Activated T-helper 1 cell treated with anti-CD3 and anti-CD28 coated beads, Interleukin-12 subunit alpha, Interleukin-12 subunit beta, Interleukin-2, Interleukin-4 antibody, amounts not matched to agents 30 ng/mL and 10 ng/mL and 1 ng/mL, durations not matched to agents 14 hours and 24 hours and 36 hours (primary cell): ENCODE measurements at regions of chr4 and their contacts with region 1.

Region 1: DNA sequence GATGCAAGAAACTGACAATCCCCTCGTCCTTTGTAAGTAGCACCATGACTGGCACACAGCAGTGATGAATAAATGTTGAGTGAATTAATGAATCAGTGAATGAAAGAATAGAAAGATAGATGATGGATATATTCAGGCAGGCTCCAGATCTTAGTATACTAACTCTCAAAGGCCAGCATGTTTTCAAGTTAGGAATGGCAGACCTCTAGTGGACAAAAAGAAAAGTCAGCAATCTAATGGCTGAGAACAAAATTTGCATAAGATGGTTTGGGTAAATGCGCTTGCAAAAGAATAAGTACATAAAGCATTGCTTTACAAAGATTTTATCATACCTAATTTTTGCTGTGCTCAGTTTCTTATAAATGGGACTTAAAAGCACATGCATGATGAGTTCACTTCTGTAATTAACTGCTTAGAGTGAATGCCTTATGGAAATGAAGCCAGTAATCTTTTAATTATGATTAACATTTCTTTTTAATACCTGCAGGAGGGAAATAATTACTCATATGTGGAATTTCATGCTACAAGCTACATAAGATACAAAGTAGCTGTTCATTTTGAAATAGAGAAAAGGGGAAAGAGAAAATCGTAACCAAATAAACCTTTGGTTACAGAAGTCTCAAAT is 126.9 kb upstream of the GPRIN3 start:
- DNase-seq: peak; percentile 5
- H3K4me3 Mint-ChIP-seq: no peak overlapping the region
- H3K27ac Mint-ChIP-seq: no peak overlapping the region
- H3K4me1 Mint-ChIP-seq: peaks cover 29% of the 10 kb centered on the region
- H3K27me3 Mint-ChIP-seq: no peaks in the 10 kb centered on the region

Region 2: GRCh38 chr4:89158884-89159503 is 275.5 kb before region 1 on chr4:
- intact Hi-C with region 1: loop called (anchors 1 kb)
- DNase-seq: no peak
- H3K4me3 Mint-ChIP-seq: no peak overlapping the region
- H3K27ac Mint-ChIP-seq: no peak overlapping the region
- H3K4me1 Mint-ChIP-seq: no peaks in the 10 kb centered on the region
- H3K27me3 Mint-ChIP-seq: peaks cover 13% of the 10 kb centered on the region

Region 3: DNA sequence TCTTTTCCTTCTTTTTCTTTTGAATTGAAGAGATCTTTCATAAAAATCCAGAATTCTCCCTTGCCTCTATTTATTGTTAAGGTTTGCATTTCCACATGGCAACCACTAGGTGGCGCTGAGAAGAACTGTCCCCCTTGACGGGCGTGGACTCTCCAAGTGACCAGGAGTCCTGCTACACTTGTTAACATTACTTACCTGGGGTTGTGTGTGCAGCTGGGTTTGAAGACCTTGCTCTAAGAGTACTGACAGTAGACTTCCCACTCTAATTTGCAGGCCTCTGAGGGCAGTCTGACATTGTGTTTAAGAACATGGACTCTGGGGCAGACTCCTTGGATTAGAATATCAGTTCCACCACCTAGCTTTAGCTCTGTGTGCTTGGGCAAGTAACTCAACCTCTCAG is 179.6 kb before region 1 on chr4:
- intact Hi-C with region 1: loop called (anchors 1 kb)
- DNase-seq: peak; percentile 13
- H3K4me3 Mint-ChIP-seq: no peak overlapping the region
- H3K27ac Mint-ChIP-seq: peak overlapping the region; percentile 68
- H3K4me1 Mint-ChIP-seq: peaks cover 76% of the 10 kb centered on the region
- H3K27me3 Mint-ChIP-seq: no peaks in the 10 kb centered on the region

Region 4: DNA sequence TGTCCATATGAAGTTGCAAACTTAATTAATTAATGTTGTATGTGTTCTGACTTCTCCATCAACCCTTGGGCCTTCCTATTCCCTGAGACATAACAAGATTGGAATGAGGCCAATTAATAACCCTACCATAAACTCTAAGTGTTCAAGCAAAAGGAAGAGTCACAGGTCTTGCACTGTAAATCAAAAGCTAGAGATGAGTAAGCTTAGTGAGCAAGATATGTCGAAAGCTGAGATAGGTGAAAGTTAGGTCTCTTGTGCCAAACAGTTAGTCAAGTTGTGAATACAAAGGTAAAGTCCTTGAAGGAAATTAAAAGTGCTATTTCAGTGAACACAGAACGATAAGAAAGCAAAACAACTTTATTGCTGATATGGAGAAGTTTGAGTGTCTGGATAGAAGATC is 68.7 kb before region 1 on chr4:
- intact Hi-C with region 1: loop called (anchors 5 kb)
- DNase-seq: no peak
- H3K4me3 Mint-ChIP-seq: no peak overlapping the region
- H3K27ac Mint-ChIP-seq: peak overlapping the region; percentile 1
- H3K4me1 Mint-ChIP-seq: peaks cover 8% of the 10 kb centered on the region
- H3K27me3 Mint-ChIP-seq: peaks cover 5% of the 10 kb centered on the region

Region 5: DNA sequence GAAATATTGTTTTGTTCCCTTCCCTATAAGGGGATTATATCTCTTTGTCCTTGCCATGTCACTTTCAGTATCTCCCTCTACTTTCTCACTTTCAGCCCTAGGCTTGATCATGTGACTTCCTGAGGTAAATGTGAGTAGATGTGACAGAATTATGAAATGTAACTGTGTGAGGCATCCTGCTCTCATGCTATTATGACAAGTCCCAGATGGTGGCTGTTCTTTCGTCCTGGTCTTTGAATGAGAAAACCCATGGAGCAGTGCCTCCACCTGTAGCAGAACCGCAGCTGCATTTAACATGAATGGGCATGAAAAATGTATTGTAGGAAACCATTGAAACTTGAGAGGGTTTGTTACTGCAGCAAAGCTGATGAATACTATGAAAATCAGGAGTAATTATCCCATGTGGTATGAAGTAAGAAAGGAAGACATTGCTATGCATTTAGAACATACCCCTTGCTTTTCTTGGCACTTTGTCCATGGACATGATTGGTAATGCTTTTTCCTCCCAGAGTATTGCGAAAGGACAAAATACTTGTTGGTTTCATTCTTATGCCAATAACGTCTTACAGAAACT is 75.3 kb after region 1 on chr4:
- intact Hi-C with region 1: loop called (anchors 1 kb)
- DNase-seq: peak; percentile 11
- H3K4me3 Mint-ChIP-seq: no peak overlapping the region
- H3K27ac Mint-ChIP-seq: no peak overlapping the region
- H3K4me1 Mint-ChIP-seq: peaks cover 17% of the 10 kb centered on the region
- H3K27me3 Mint-ChIP-seq: peaks cover 23% of the 10 kb centered on the region